HepG2 (cell line): ENCODE measurements at regions of chr7 and their contacts with region 1.

Region 1: DNA sequence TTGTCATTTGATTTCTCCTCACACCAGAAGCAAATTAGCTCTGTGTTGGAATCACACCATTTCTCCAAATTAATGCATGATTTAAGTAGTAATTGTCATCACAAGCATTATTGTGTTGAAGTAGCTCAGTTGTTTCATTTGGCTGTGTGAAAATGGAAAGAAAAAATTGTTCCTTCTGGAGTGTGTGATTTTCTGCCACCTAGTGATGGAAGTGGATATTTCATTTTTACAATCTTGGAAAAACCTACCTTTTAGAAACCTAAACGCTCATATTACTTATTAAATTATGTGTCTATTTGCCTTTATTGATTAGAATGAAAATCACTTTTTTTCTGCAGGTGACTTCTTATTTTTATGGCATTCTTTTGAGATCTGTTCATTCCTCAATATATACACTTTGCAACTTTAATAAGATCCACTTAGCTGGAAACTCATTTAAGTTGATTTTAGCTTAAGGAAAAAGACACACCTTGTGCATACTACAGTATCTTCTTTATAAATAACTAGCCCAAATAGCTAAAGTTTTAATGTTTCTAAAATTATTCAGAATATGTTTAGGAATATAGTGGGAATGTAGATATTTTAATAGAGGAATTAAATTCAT is 50.0 kb downstream of the SRI start:
- DNase-seq: peak; percentile 10
- ATAC-seq: no peak; the same call in 2 of the 3 replicates
- H3K4me3 ChIP-seq: no peak overlapping the region
- H3K27ac ChIP-seq: no peak overlapping the region
- H3K4me1 ChIP-seq: no peaks in the 10 kb centered on the region
- H3K27me3 ChIP-seq: no peaks in the 10 kb centered on the region
- CTCF ChIP-seq: peak; percentile 66
- EP300 ChIP-seq: no peak
- POLR2A ChIP-seq: no peak
- RAD21 ChIP-seq: no peak

Region 2: DNA sequence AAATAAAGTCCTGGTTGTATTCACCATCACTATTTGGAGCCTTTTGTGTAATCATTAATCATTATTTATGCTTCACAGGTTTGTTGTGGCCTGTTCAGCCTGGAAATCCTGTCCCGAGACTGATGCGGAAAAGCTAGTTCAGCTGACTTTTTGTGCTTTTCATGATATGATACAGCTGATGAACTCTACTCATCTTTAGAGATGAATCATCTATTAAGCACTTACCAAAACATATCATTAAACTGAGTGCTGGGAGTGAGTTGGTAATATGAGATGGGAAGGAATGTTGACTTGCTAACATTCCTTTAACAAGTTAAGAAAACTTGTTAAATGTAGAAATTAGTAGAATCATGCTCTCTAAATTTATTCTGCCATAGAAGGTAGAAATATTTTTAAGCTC is 771.4 kb before region 1 on chr7:
- CTCF ChIA-PET with region 1: no interaction called
- POLR2A ChIA-PET with region 1: no interaction called
- in situ Hi-C with region 1: no loop called
- intact Hi-C with region 1: no loop called
- DNase-seq: no peak
- ATAC-seq: no peak
- H3K4me3 ChIP-seq: no peak overlapping the region
- H3K27ac ChIP-seq: no peak overlapping the region
- H3K4me1 ChIP-seq: peaks cover 19% of the 10 kb centered on the region
- H3K27me3 ChIP-seq: no peaks in the 10 kb centered on the region
- CTCF ChIP-seq: no peak
- EP300 ChIP-seq: no peak
- POLR2A ChIP-seq: no peak
- RAD21 ChIP-seq: no peak

Region 3: DNA sequence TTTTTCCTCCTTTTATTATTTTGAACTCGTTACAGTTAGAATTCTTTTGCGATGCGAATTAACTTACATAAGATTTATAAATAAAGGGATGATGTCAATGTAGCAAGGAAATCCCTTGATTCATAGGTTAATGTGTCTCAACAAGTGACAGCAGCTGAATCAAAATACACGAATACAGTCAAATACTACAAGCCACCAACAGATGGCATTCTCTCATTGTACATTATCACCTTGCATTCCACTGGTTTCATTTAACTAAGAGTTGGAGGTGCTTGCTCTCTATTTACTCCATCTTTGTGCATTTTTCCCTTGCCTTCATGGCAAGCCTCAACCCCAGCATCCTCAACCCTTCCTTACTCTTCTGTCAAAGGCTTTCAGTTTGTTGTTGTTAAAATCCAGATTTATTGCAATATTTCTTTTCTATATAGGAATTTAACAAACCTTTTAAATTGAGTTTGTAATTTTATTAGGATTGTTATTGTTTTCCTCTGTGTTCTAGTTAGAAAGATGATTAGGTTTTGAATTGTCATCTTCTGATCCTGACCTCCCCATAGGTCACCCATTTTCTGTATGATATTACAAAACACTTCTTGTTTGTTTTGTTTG is 371.9 kb before region 1 on chr7:
- CTCF ChIA-PET with region 1: interaction called, 5 read pairs
- POLR2A ChIA-PET with region 1: no interaction called
- in situ Hi-C with region 1: no loop called
- intact Hi-C with region 1: loop called (anchors 2 kb)
- DNase-seq: peak; percentile 48
- ATAC-seq: peak; percentile 80
- H3K4me3 ChIP-seq: no peak overlapping the region
- H3K27ac ChIP-seq: no peak overlapping the region
- H3K4me1 ChIP-seq: no peaks in the 10 kb centered on the region
- H3K27me3 ChIP-seq: no peaks in the 10 kb centered on the region
- CTCF ChIP-seq: peak; percentile 82
- EP300 ChIP-seq: no peak
- POLR2A ChIP-seq: no peak
- RAD21 ChIP-seq: peak; percentile 45; the same call in 1 of the 2 replicates

Region 4: DNA sequence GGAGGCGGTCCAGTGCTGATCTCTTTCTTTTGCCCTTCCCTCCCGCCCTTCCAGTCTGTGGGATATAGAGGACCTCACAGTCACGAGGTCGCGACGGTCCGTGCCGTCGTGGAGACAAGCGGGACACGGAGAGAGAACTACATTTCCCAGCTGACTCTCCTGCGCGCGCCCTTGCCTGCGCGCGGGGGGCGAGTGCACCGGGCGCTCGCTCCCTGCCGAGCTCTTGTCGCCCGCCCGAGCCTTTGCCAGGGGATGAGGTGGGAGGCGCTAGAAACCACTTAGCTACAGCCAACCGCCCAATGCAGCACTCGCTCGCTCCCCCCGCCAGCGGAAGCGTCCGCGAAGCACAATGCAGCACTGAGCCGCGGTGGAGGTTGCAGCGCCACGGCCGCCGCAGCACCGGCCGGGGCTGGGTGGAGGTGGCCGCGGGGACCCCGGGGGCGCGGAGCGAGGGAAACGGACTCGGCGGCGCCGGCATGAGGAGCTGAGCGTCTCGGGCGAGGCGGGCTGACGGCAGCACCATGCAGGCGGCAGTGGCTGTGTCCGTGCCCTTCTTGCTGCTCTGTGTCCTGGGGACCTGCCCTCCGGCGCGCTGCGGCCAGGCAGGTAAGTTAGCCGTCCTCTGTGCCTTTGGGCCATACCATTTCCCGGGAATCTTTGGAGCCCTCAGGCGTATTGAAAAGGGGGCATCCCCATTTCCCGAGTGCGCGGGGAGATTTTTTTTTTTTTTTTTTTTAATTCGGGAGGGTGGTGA is 235.7 kb before region 1 on chr7 and contains the start of gene ADAM22:
- CTCF ChIA-PET with region 1: no interaction called
- POLR2A ChIA-PET with region 1: no interaction called
- in situ Hi-C with region 1: no loop called
- intact Hi-C with region 1: loop called (anchors 10 kb)
- DNase-seq: peak; percentile 78
- ATAC-seq: peak; percentile 99
- H3K4me3 ChIP-seq: peak within 1 kb of the TSS; percentile 64 to 77 (median 70)
- H3K27ac ChIP-seq: no peak within 1 kb of the TSS
- H3K4me1 ChIP-seq: peaks cover 27% of the 10 kb centered on the region
- H3K27me3 ChIP-seq: no peaks in the 10 kb centered on the region; a peak in 1 of 5 replicates
- CTCF ChIP-seq: peak; percentile 72
- EP300 ChIP-seq: no peak
- POLR2A ChIP-seq: peak; percentile 76 to 79
- RAD21 ChIP-seq: peak; percentile 48
- total RNA-seq, gene ADAM22: 2.9 and 6.7 TPM in 2 replicates

Region 5: DNA sequence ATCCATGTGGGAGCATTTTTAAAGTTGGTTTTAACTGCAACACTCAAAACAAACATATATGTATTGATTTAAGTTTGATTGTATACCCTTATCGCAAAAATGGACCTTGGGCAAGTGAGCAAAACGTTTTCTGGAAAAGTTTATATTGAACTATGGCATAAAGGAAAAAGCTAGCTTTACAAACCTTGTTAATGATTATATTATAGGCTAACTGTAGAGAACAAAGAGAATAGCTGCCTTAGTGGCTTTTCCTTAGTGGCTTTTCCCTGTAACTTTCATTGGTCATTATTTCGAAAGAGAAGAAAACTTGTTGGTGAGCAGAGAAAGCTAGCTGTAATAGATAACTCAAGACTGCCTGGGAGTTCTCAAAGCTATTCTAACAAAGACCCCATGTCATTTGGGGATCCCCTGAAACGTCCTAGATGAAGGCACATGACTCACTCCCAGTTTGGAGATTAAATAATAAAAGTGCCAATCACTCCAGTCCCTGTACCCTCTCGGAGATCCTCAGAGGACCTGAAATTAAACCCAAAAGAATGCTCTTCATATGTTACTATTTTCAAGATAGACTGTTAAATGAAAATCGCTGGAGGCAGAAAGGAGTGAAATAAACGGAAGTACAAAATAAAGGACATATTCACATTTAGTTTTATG is 42.1 kb before region 1 on chr7:
- CTCF ChIA-PET with region 1: no interaction called
- POLR2A ChIA-PET with region 1: no interaction called
- in situ Hi-C with region 1: no loop called
- intact Hi-C with region 1: loop called (anchors 5 kb)
- DNase-seq: peak; percentile 72
- ATAC-seq: peak; percentile 97
- H3K4me3 ChIP-seq: no peak overlapping the region; a peak in 1 of 6 replicates
- H3K27ac ChIP-seq: peak overlapping the region; percentile 68
- H3K4me1 ChIP-seq: peaks cover 34% of the 10 kb centered on the region
- H3K27me3 ChIP-seq: no peaks in the 10 kb centered on the region
- CTCF ChIP-seq: no peak
- EP300 ChIP-seq: peak in 1 of 2 experiments; percentile 53; a peak in 1 of 4 replicates
- POLR2A ChIP-seq: no peak
- RAD21 ChIP-seq: no peak

Region 6: DNA sequence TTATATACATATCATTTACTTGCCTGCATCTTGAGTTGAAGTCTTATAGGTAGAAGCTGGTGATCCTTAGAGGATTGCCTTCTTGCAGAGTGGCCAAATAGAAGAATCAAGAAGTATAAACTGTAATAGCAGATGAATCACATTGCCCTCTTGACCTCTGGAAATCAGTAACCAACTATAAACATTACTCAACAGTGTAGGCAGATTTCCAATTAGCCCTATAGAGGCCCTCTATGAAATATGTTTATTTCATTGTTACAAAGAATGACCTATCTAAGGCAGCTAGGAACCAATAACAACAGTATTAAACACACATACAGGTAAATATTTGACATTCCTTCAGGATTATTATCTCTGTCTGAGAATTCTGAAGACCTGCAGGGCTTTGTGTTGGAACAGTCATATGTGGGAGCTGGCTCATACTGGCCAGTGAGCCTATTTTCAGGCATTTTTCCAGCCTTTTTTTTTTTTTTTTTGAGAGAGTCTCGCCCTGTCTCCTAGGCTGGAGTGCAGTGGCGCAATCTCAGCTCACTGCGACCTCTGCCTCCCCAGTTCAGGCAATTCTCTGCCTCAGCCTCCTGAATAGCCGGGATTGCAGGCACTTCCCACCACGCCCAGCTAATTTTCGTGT is 57.2 kb after region 1 on chr7:
- CTCF ChIA-PET with region 1: no interaction called
- POLR2A ChIA-PET with region 1: no interaction called
- in situ Hi-C with region 1: no loop called
- intact Hi-C with region 1: no loop called
- DNase-seq: peak; percentile 90
- ATAC-seq: peak; percentile 94
- H3K4me3 ChIP-seq: no peak overlapping the region
- H3K27ac ChIP-seq: no peak overlapping the region
- H3K4me1 ChIP-seq: peaks cover 21% of the 10 kb centered on the region
- H3K27me3 ChIP-seq: peaks cover 0 to 44% of the 10 kb centered on the region in 2 experiments; a peak in 3 of 5 replicates
- CTCF ChIP-seq: no peak
- EP300 ChIP-seq: peak in 1 of 2 experiments; percentile 66; a peak in 1 of 4 replicates
- POLR2A ChIP-seq: no peak
- RAD21 ChIP-seq: no peak